ENCODE measurements at regions of chr12 and their contacts with region 1.

Region 1: DNA sequence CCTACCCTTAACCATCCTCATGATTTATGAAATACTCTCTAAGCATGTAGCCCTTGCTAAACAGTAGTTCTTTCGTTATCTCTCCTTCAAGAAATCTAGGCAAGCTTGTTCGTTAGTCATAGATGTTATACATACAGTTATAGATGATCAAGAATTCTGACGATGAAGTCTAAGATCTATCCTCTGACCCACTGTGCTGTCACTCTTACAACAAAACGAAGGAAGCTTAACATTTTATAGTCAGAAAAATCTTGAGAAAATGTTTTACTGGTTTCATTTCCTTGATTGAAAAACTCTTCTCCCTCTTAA is 68.9 kb downstream of the SPPL3 start:
- DNase-seq: peak; percentile 36
- H3K27ac ChIP-seq: no peak overlapping the region
- CTCF ChIP-seq: no peak

Region 2: GRCh38 chr12:120856980-120857379 is 21.7 kb after region 1 on chr12:
- CTCF ChIA-PET with region 1: interaction called, 10 read pairs
- POLR2A ChIA-PET with region 1: no interaction called
- DNase-seq: no peak
- H3K27ac ChIP-seq: no peak overlapping the region
- CTCF ChIP-seq: no peak

Measured in RWPE1 (cell line).